SK-N-SH (cell line): ENCODE measurements at regions of chr11 and their contacts with region 1.

Region 1: DNA sequence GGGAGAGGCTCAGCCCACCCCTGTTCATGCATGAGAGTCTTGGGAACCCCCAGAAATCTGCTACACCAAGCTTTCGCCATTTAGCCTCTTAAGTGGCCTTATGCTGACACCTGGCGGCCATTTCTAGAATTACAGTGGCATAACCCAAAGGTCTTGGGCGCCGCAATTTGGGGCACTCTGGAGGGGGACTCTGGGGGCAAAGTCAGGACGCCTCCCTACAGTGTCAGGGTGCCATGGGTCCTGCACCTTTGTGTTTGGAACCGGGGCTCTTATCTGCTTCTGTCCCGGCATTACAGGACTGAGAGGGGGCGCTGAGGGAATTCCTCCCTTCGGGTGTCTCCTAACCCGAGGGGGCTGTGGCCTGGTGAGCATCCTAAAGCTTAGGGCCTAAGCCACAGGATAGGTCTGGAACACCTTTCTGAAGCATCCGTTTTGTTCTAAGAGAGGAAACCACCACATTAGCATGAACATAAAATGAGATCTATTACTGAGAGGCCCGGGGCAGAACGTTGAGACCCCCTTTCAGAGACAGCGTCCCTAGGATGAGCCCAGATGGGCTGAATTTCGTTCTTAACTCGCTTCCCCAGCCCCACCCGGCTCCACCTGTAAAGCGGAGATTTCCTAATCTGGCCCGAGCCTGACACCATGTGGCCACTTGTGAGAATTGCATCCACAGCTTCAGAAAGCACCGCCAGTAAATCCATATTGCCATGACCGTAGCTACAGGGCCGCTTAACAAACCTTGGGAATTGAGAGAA is 9.3 kb downstream of the INS start:
- DNase-seq: peak; percentile 90
- H3K4me3 ChIP-seq: peak overlapping the region in 1 of 2 experiments; percentile 5; a peak in 1 of 4 replicates
- H3K27ac ChIP-seq: peak overlapping the region in 1 of 2 experiments; percentile 4; a peak in 1 of 4 replicates
- H3K4me1 ChIP-seq: peaks cover 0 to 21% of the 10 kb centered on the region in 2 experiments; a peak in 1 of 4 replicates
- H3K27me3 ChIP-seq: peaks cover 28% of the 10 kb centered on the region
- CTCF ChIP-seq: peak; percentile 70
- EP300 ChIP-seq: no peak
- RAD21 ChIP-seq: peak; percentile 85

Region 2: DNA sequence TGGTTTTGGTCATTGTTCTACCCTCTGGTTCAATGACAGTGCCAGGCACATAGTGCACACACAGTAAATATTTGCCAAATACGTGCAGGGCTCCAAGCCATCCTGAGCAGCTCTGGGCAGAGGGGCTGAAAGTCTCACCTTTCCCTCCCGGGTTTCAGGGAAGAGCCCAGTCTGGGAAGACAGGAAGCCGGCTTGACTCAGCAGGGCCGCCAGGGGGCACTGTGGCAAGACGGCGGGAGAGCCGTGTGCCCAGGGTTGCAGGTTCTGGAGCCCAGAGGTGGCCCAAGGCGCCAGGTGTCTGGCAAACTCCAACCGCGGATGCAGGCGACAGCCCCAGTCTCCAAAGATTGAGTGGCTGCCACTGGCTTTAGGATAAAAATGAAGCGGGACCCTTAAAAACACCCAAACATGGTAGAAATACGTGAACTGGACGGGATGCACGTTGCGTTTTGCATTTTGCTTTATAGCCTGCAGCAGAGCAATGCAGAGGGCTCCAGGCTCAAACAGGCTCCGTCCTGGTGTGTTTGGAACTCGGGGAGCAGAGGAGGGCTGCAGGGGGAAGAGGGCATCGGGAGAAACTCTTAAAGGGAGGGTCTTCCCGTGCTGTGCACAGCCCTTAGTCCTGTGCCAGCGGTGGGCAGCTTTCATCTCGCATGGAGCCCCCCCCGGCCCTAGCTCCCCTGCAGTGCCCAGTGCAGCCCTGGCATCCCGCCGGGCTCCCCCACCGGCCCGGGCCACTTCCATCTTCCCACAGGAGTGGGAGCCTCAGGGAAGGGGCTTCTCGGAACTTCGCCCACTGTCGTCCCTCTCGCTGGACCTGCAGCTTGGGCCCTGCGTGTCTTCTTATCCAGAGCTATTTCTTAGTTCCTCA is 511.4 kb before region 1 on chr11:
- CTCF ChIA-PET with region 1: interaction called, 73 read pairs
- POLR2A ChIA-PET with region 1: no interaction called
- DNase-seq: peak; percentile 86
- H3K4me3 ChIP-seq: no peak overlapping the region; a peak in 1 of 4 replicates
- H3K27ac ChIP-seq: no peak overlapping the region; a peak in 1 of 4 replicates
- H3K4me1 ChIP-seq: peaks cover 0 to 25% of the 10 kb centered on the region in 2 experiments; a peak in 1 of 4 replicates
- H3K27me3 ChIP-seq: no peaks in the 10 kb centered on the region
- CTCF ChIP-seq: peak; percentile 82
- EP300 ChIP-seq: no peak
- RAD21 ChIP-seq: peak; percentile 14; the same call in 1 of the 2 replicates

Region 3: GRCh38 chr11:1852877-1853276 is 298.8 kb before region 1 on chr11 and contains the start of gene LSP1:
- CTCF ChIA-PET with region 1: interaction called, 32 read pairs
- POLR2A ChIA-PET with region 1: no interaction called
- DNase-seq: no peak
- H3K4me3 ChIP-seq: no peak within 1 kb of the TSS
- H3K27ac ChIP-seq: no peak within 1 kb of the TSS
- H3K4me1 ChIP-seq: no peaks in the 10 kb centered on the region; a peak in 1 of 4 replicates
- H3K27me3 ChIP-seq: no peaks in the 10 kb centered on the region
- CTCF ChIP-seq: no peak
- EP300 ChIP-seq: no peak
- RAD21 ChIP-seq: no peak
- polyA plus RNA-seq, gene LSP1: 0.34 and 0.38 TPM in 2 replicates

Region 4: DNA sequence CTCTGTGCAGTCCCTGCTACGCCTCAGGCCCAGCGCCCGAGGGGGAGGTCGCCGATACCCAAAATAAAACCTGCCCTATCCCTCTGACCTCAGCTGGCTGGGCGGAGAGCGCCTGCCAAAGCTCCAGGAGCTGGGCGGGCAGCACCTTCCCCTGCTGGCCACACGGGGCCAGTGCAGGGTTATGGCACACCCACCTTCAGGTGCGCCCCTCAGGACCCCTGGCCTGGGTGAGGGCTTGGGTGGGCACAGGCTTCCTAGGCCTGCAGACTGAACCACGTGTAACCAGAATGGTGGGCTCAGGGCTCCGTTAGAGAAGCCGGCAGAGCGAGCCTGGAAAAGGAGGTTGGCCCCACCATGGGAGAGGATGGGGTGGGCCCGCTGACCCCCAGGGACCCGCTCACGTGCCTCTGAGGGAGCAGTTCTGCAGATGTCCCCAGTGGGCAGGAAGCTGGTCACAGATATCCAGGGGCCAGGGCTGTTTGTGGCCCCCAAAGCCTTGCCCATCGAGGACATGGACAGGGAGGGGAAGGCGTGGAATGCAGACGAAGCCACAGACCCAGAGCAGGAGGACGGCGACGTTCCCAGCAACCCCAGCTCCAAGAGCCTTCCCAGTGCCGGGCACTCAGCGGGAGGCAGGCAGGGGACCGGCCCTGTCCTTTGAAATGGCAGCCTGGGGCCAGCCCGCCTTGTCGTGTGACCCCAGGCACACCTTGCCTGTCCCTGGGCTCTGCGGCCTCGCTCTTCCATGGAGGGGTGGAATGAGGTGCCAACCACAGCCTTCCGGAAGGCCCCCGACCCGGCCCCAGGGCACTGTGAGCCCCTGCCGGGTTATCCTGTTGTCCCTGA is 233.8 kb before region 1 on chr11:
- CTCF ChIA-PET with region 1: interaction called, 16 read pairs
- POLR2A ChIA-PET with region 1: no interaction called
- DNase-seq: peak; percentile 59
- H3K4me3 ChIP-seq: no peak overlapping the region
- H3K27ac ChIP-seq: no peak overlapping the region
- H3K4me1 ChIP-seq: peaks cover 0 to 21% of the 10 kb centered on the region in 2 experiments; a peak in 1 of 4 replicates
- H3K27me3 ChIP-seq: no peaks in the 10 kb centered on the region
- CTCF ChIP-seq: peak; percentile 41; the same call in 1 of the 2 replicates
- EP300 ChIP-seq: no peak
- RAD21 ChIP-seq: no peak

Region 5: DNA sequence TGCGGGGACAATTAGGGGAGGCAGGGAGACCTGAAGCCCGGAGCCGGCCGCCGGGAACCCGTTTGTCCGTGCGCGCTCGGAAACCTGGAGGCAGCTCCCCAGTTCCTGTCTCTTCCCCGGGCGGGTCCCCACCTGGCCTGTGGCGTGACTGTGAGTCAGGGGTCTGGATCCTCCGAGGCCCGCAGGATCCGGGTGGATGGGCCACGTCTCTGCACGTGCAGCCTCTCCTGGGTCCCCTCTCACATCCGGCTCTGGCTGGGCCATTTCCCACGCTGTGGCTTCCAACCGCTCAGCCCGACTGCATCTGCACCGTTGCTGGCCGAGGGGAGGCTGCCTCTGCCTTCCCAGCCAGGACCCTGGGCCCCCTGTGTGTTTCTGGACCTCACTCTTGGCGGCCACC is 139.2 kb before region 1 on chr11:
- CTCF ChIA-PET with region 1: interaction called, 21 read pairs
- POLR2A ChIA-PET with region 1: no interaction called
- DNase-seq: no peak
- H3K4me3 ChIP-seq: no peak overlapping the region
- H3K27ac ChIP-seq: no peak overlapping the region
- H3K4me1 ChIP-seq: no peaks in the 10 kb centered on the region
- H3K27me3 ChIP-seq: no peaks in the 10 kb centered on the region
- CTCF ChIP-seq: no peak
- EP300 ChIP-seq: no peak
- RAD21 ChIP-seq: no peak

Region 6: DNA sequence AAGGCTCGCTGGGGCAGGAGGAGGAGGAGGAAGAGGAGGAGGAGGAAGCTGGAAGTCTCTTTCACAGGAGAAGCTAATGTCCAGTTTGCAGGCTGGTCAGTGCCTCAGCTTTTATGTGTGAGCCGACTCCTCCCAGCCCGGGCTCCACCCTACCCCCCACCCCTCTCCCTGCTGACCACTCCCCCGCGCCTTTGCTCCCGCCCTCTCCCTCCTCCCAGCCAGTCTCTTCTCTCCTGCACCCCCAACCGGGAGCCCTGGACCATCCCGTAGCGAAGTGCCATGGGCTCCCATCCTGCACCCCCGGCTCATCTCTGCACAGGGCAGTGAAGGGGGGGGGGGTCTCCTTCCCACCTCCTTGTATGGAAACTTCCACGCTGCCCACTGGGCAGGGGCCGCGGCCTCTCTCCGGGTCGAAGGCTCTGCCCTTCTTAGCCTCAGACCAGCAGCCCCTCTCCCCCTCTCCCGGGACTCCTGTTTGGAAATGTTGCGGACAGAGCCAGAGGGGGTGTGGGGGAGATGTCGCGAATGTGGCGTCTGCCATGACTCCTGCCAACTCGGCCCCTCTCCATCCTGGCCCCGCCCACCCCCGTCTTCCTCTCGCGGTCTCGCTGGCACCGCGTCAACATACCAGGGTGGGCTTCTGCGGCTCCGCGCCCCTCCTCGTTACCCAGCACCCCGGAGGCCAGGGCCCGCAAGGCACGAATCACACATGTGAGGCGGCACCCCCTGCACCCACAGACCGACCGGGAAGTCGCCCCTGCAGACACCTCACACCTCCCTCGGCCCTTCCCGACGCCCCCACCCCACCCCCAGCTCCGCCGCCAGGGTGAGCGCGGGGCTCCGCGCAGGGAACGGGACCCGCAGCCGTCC is 14.2 kb before region 1 on chr11:
- CTCF ChIA-PET with region 1: interaction called, 98 read pairs
- POLR2A ChIA-PET with region 1: interaction called, 3 read pairs
- DNase-seq: peak; percentile 95
- H3K4me3 ChIP-seq: peak overlapping the region in 1 of 2 experiments; percentile 41; a peak in 1 of 4 replicates
- H3K27ac ChIP-seq: peak overlapping the region in 1 of 2 experiments; percentile 34; a peak in 1 of 4 replicates
- H3K4me1 ChIP-seq: peaks cover 0 to 17% of the 10 kb centered on the region in 2 experiments; a peak in 1 of 4 replicates
- H3K27me3 ChIP-seq: peaks cover 37% of the 10 kb centered on the region
- CTCF ChIP-seq: no peak
- EP300 ChIP-seq: no peak
- RAD21 ChIP-seq: no peak